ENCODE measurements at regions of chr16 and their contacts with region 1.

Region 1: DNA sequence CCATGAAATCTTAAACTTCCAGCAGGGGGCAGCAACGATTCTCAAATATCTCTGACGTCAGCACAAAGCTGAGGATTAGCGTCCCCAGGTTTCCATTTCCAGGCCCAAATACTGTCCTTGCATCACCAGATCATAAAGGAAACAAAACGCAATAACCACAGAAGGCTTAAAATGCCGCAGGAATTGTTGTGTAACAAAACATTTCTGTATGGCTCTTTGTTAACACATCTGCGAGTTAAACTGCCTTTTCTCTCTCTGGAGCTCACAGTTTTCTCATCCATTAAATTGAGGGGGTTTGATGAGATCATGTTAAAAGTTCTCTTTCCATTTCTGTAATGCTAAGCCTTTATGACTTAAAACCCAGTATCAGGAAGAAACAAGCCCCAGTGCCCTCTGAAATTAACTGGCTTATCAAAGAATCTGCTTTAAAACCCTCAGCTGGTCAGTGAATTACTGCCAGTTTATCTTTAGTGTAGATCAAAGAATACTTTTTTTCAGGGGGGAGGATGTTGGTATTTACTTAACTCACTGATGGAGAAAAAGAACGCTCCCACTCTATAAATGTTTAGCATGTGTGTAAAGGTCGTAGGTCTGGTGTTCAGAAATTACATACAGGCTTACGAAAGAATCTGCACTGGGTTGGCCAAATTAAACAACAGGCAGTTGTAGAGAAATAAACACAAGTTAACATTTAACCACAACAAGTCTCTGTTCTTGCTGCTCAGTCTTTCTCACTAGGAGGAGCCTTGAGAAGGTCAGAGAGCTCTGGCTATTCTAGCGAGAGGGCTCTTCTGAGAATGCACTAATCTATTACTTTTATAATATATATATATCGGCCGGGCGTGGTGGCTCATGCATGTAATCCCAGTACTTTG is 10.6 kb upstream of the TERF2 start:
- DNase-seq: peak; percentile 99
- ATAC-seq: peak; percentile 89
- H3K4me3 ChIP-seq: peak overlapping the region; percentile 31 to 63 (median 51); a peak in 5 of 6 replicates
- H3K27ac ChIP-seq: peak overlapping the region; percentile 95
- H3K4me1 ChIP-seq: peaks cover 65% of the 10 kb centered on the region
- H3K27me3 ChIP-seq: no peaks in the 10 kb centered on the region
- CTCF ChIP-seq: peak; percentile 80
- EP300 ChIP-seq: peak; percentile 48 to 99; a peak in 3 of 4 replicates
- POLR2A ChIP-seq: peak in 1 of 2 experiments; percentile 57; a peak in 1 of 4 replicates
- RAD21 ChIP-seq: peak; percentile 61

Region 2: DNA sequence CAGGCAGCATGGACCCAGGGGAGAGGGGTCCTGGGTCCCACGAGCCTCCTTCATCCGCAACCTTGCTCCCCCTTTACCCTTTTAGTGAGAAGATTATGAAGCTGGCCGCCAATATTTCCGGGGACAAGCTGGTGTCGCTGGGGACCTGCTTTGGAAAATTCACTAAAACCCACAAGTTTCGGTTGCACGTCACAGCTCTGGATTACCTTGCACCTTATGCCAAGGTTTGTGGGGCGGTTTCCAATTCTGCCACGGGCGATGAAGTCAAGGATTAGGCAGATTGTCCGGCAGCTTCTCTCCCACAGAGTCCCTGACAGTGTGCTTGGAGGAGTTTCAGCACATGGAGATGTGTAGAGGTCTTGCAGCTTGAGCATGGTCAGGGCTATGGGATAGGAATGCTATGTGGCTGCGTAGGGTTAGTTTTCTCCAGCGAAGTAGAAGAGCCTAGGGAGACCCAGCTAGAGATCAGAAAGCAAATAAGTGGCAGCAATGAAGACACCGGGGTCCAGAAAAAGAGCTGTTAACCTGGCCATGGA is 56.2 kb before region 1 on chr16:
- CTCF ChIA-PET with region 1: no interaction called
- POLR2A ChIA-PET with region 1: no interaction called
- in situ Hi-C with region 1: no loop called
- intact Hi-C with region 1: no loop called
- DNase-seq: no peak
- ATAC-seq: peak; percentile 45
- H3K4me3 ChIP-seq: peak overlapping the region; percentile 79 to 94 (median 86)
- H3K27ac ChIP-seq: peak overlapping the region; percentile 86
- H3K4me1 ChIP-seq: peaks cover 39% of the 10 kb centered on the region
- H3K27me3 ChIP-seq: no peaks in the 10 kb centered on the region; a peak in 1 of 5 replicates
- CTCF ChIP-seq: no peak
- EP300 ChIP-seq: no peak
- POLR2A ChIP-seq: no peak
- RAD21 ChIP-seq: 0 out of 2 replicates have a peak, but pooled peaks have one; percentile 6

Region 3: DNA sequence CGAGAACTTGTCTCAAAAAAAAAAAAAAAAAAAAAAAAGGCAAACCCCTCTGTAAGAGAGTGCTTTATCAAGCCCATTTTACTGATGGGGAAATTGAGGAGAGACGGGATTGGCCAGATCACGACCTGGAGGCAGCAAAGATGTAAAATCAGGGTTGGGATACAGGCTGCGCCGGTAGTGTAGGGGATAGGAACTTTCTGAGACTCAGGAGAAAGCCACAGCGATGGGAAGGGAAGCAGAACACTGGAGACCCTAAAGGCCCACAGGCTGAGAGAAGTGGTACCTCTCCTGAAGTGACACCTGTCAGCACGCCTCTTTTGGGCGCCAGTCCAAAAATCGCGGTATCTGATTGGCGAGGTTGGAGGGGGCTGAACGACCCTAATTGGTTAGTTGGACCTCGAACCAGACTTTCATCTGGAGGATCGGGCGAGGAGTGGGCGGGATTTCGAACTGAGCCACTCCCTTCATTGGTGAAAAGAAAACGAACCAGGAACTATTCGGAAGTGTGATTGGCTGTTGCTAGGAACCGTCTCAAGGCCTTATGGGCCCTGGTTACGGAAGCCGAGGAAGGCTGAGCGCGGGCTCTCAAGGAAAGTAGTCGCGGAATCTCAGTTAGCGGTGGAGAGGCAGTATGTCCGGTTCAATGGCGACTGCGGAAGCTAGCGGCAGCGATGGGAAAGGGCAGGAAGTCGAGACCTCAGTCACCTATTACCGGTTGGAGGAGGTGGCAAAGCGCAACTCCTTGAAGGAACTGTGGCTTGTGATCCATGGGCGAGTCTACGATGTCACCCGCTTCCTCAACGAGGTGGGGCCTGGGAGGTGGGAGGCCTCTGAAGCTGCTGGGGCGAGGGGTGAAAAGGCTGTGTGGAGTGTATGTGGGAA is 27.9 kb after region 1 on chr16 and contains the start of gene CYB5B:
- CTCF ChIA-PET with region 1: no interaction called
- POLR2A ChIA-PET with region 1: interaction called, 10 read pairs
- in situ Hi-C with region 1: no loop called
- intact Hi-C with region 1: no loop called
- DNase-seq: peak; percentile 97
- ATAC-seq: peak; percentile 98
- H3K4me3 ChIP-seq: peak within 1 kb of the TSS; percentile 83 to 95 (median 95)
- H3K27ac ChIP-seq: peak within 1 kb of the TSS; percentile 72
- H3K4me1 ChIP-seq: peaks cover 62% of the 10 kb centered on the region
- H3K27me3 ChIP-seq: no peaks in the 10 kb centered on the region; a peak in 1 of 5 replicates
- CTCF ChIP-seq: peak; percentile 43
- EP300 ChIP-seq: peak; percentile 26 to 50; a peak in 1 of 4 replicates
- POLR2A ChIP-seq: peak; percentile 88 to 92
- RAD21 ChIP-seq: peak; percentile 39; the same call in 1 of the 2 replicates
- total RNA-seq, gene CYB5B: 432 and 638 TPM in 2 replicates

Region 4: DNA sequence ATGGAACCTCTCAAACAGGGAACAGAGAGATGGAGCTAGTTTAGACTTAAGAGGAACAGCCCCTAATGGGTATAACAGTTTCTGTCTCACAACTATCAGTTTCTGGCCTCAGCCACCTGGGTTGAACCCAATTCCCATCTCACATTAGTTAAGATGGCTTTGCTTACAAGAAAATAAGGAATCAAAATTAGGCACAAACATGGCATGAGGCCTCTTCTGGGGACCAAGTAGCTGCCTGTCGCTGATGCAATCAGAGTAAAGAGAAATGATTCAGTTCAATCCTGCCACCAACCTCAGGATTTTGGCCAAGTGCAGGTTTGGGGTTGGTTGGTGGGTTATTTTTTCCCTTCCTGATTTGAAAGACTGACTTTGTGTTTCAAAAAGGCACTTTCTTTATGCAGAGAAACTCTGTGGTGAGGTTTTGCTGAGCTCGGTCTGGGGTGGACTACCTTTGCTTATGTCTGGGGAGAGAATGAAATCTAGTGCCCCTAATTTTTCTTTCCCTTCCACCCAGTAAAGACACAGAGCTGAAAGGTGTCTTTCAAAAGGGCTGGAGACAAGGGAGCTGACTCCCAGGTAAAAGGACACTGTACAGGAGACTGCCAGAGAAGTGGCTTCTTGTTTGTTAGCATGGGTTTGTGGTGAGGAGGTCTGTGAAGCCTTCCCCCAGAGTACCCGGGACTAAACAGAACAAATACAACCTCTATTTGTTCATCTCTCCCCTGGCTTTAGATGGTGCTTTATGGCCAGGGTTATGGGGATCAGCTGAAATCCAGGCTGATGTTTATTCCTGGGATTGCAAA is 124.6 kb after region 1 on chr16:
- CTCF ChIA-PET with region 1: no interaction called
- POLR2A ChIA-PET with region 1: interaction called, 16 read pairs
- in situ Hi-C with region 1: no loop called
- intact Hi-C with region 1: no loop called
- DNase-seq: peak; percentile 92
- ATAC-seq: peak; percentile 94
- H3K4me3 ChIP-seq: peak overlapping the region; percentile 14 to 47 (median 20); a peak in 4 of 6 replicates
- H3K27ac ChIP-seq: peak overlapping the region; percentile 63
- H3K4me1 ChIP-seq: peaks cover 48% of the 10 kb centered on the region
- H3K27me3 ChIP-seq: no peaks in the 10 kb centered on the region
- CTCF ChIP-seq: peak; percentile 26; the same call in 1 of the 2 replicates
- EP300 ChIP-seq: peak in 1 of 2 experiments; percentile 50; a peak in 1 of 4 replicates
- POLR2A ChIP-seq: no peak
- RAD21 ChIP-seq: no peak

Region 5: DNA sequence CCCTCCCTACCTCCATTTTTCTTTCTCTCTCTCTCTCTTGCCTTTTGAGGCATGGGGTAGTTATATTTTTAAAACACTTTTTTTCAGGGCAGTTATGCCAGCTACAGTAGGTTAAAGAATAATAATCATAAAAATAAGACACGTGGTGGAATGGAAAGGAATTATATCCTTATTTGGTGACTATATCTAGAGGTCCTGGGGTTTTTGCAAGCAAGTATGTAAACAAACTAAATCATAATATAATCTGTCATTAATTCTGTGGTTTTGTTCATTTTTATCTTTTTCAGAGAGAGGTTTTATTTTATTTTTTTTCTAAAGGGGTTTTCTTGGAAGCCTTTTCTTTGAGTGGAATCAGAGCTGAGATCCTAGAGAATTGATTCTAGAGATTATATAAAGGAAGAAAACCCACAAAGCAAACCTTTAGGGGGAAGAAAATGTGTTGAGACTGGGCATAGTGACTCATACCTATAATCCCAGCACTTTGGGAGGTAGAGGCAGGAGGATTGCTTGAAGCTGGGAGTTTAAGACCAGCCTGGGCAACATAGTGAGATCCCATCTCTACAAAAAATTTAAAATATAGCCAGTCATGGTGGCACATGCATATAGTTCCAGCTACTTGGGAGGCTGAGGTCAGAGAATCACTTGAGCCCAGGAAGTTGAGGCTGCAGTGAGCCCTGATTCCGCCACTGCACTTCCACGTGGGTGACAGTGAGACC is 276.7 kb after region 1 on chr16:
- CTCF ChIA-PET with region 1: no interaction called
- POLR2A ChIA-PET with region 1: interaction called, 10 read pairs
- in situ Hi-C with region 1: no loop called
- intact Hi-C with region 1: loop called (anchors 5 kb)
- DNase-seq: no peak
- ATAC-seq: no peak
- H3K4me3 ChIP-seq: no peak overlapping the region
- H3K27ac ChIP-seq: peak overlapping the region; percentile 67
- H3K4me1 ChIP-seq: peaks cover 50% of the 10 kb centered on the region
- H3K27me3 ChIP-seq: no peaks in the 10 kb centered on the region
- CTCF ChIP-seq: no peak
- EP300 ChIP-seq: no peak
- POLR2A ChIP-seq: no peak
- RAD21 ChIP-seq: no peak

Region 6: GRCh38 chr16:69754469-69755310 is 358.3 kb after region 1 on chr16 and contains the start of gene NOB1:
- CTCF ChIA-PET with region 1: no interaction called
- POLR2A ChIA-PET with region 1: interaction called, 36 read pairs
- in situ Hi-C with region 1: no loop called
- intact Hi-C with region 1: loop called (anchors 1 kb)
- DNase-seq: peak; percentile 96
- ATAC-seq: peak; percentile 96
- H3K4me3 ChIP-seq: peak within 1 kb of the TSS; percentile 96 to 100 (median 100)
- H3K27ac ChIP-seq: peak within 1 kb of the TSS; percentile 74
- H3K4me1 ChIP-seq: peaks cover 40% of the 10 kb centered on the region
- H3K27me3 ChIP-seq: peaks cover 0 to 5% of the 10 kb centered on the region in 2 experiments; a peak in 1 of 5 replicates
- CTCF ChIP-seq: peak; percentile 100
- EP300 ChIP-seq: no peak
- POLR2A ChIP-seq: peak; percentile 98 to 99
- RAD21 ChIP-seq: peak; percentile 100
- total RNA-seq, gene NOB1: 47.1 and 83.5 TPM in 2 replicates

Measured in HepG2 (cell line).